ENCODE measurements at regions of chr2 and their contacts with region 1.

Region 1: DNA sequence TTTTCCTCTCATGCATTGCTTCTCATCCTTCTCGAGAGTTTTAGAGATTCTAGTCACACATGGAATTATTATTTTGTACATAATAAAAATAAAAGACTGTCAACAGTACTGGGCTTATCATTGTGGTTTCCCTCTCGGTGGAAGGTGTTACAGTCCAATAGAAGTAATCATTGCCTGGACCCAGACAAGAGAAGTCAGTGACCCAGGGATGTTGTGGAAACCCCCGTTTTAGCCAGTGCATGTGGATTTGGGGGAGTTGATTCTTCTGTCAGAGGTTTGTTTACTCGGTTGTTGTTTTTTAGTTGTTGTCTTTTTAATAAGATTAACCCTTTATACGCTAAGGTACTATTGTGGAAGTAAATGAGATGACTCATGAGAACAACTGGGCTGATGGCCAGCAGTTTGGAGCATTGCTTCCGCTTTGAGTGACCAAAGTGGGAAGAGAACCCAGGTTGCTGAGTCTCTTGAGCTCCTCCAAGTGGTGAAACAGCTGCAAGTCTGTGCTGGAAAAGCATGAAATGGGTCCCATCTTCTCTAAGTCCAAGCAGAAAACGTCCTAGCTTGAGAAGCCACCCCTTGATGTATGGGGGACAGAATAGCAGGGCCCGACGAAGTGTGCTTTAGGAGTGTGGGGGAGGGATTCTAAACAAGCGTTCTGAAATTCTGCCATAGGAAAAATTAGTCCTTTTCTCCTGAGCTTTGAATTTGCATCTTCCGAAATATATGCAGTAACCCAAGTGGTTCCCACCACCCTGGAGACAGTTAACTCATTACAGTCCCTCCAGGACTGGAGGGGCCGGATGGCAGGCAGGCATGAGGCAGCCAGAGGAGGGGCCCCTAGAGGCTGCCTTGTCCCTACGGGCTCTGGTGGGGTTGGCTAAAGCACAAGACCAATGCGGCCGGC is 61.8 kb upstream of the GPR45 start:
- DNase-seq: no peak
- ATAC-seq: no peak
- H3K4me3 ChIP-seq: no peak overlapping the region
- H3K4me3 Mint-ChIP-seq: no peak overlapping the region
- H3K27ac ChIP-seq: no peak overlapping the region
- H3K27ac Mint-ChIP-seq: peak overlapping the region; percentile 41
- H3K4me1 ChIP-seq: peaks cover 52 to 66% of the 10 kb centered on the region in 2 donors
- H3K4me1 Mint-ChIP-seq: peaks cover 75% of the 10 kb centered on the region
- H3K27me3 ChIP-seq: no peaks in the 10 kb centered on the region
- H3K27me3 Mint-ChIP-seq: no peaks in the 10 kb centered on the region
- CTCF ChIP-seq: no peak

Region 2: GRCh38 chr2:105143467-105144151 is 36.1 kb before region 1 on chr2:
- CTCF ChIA-PET with region 1: interaction called, 4 read pairs
- POLR2A ChIA-PET with region 1: no interaction called
- intact Hi-C with region 1: loop called (anchors 5 kb)
- DNase-seq: peak; percentile 70
- ATAC-seq: peak; percentile 91
- H3K4me3 ChIP-seq: peak overlapping the region in 4 of 5 experiments; percentile 48 to 78 (median 68)
- H3K4me3 Mint-ChIP-seq: peak overlapping the region; percentile 94
- H3K27ac ChIP-seq: peak overlapping the region; percentile 15 to 27
- H3K27ac Mint-ChIP-seq: peak overlapping the region; percentile 89
- H3K4me1 ChIP-seq: peaks cover 17 to 24% of the 10 kb centered on the region in 2 donors
- H3K4me1 Mint-ChIP-seq: peaks cover 30% of the 10 kb centered on the region
- H3K27me3 ChIP-seq: peaks cover 0 to 7% (median 0%) of the 10 kb centered on the region in 4 experiments
- H3K27me3 Mint-ChIP-seq: no peaks in the 10 kb centered on the region
- CTCF ChIP-seq: no peak

Region 3: GRCh38 chr2:105235388-105236054 is 55.8 kb after region 1 on chr2:
- CTCF ChIA-PET with region 1: interaction called, 24 read pairs
- POLR2A ChIA-PET with region 1: no interaction called
- intact Hi-C with region 1: loop called (anchors 5 kb)
- DNase-seq: peak; percentile 81
- ATAC-seq: peak; percentile 68
- H3K4me3 ChIP-seq: no peak overlapping the region
- H3K4me3 Mint-ChIP-seq: no peak overlapping the region
- H3K27ac ChIP-seq: no peak overlapping the region
- H3K27ac Mint-ChIP-seq: no peak overlapping the region
- H3K4me1 ChIP-seq: peaks cover 10 to 12% of the 10 kb centered on the region in 2 donors
- H3K4me1 Mint-ChIP-seq: peaks cover 24% of the 10 kb centered on the region
- H3K27me3 ChIP-seq: no peaks in the 10 kb centered on the region
- H3K27me3 Mint-ChIP-seq: no peaks in the 10 kb centered on the region
- CTCF ChIP-seq: peak; percentile 93

Measured in B cell (primary cell).